ENCODE measurements at regions of chr11 and their contacts with region 1.

Region 1: DNA sequence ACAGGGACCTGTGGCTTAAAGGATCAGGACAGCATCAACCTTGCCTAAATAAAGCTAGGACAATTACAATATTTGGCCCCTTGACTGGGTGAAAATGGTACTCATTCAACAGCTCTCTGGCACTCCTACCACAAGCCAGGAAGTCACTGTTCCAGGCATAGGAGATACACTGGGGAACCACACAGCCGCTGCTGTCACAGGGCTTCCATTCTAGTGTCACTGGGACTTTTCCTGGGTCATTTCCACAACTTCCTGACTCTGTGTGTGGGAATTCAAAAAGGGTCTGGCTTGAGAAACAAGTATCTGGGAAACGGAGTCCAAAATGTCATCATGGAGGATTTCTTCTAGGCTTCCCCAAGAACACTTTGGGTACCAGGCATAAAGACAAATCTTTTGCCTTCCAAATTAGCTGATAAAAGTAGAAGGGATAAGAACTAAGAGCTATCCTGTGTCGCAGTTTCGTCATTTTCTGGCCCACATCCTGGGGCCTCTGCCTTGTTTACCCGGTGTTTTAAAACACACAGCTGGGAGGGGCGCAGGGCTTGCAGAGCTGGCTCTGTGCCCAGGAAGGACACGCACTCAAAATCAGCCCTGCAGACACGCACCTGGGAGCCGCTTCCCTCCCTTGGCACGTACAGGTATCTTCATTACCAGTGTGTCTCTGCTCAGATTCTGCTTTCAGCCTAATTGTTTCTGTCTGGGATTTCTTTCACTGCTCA is 38.0 kb downstream of the TMEM45B start:
- DNase-seq: peak; percentile 10 to 89 (median 73)
- H3K4me3 ChIP-seq: peak overlapping the region; percentile 33
- H3K4me3 Mint-ChIP-seq: peak overlapping the region in 6 of 7 donors; percentile 6 to 75 (median 62)
- H3K27ac ChIP-seq: peak overlapping the region; percentile 21
- H3K27ac Mint-ChIP-seq: peak overlapping the region; percentile 51 to 98 (median 94)
- H3K4me1 ChIP-seq: peaks cover 31% of the 10 kb centered on the region
- H3K4me1 Mint-ChIP-seq: peaks cover 31 to 41% (median 35%) of the 10 kb centered on the region in 3 donors
- H3K27me3 ChIP-seq: no peaks in the 10 kb centered on the region
- H3K27me3 Mint-ChIP-seq: peaks cover 0 to 1% of the 10 kb centered on the region in 2 donors

Region 2: DNA sequence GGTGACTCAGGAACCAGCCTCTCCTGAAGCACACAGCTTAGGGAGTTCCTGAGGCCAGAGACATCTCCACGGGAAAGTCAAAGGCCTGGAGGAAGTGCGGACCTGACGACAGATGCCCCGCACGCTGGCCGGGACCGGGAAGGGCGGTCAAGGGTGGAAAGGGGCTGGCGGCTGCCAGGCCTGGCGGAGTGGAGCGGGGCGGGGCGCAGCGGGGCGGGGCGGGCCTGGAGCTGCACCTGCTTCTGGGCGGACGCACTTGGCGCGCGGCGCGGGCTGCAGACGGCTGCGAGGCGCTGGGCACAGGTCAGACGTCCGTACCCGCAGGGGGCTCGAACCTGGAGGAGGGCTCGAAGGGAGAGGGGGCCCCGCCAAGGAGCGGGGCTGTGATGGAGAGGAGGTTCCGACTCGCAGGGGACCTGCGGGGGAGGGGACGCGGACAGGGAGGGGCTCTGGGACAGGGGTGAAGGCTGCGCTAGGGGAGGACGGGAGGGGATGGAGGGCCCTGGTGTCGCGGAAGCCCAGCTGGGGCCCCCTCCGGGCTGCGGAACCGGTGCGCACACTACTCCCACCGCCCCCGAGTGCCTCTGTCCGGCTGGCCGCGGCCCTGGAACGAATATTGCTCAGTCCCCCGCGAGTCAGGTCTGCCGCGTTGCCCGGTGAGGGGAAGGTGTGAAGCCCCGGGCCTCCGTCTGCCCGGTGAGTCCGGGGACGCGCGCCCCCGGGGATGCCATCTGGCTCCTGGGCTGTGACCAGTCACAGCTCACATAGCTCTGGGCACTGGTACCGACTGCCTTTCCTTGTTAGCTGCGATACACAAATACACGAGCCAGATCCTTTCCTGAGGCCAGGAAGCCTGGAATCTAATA is 37.8 kb before region 1 on chr11 and contains the start of gene TMEM45B:
- CTCF ChIA-PET with region 1: interaction called, 3 read pairs
- POLR2A ChIA-PET with region 1: interaction called, 16 read pairs
- DNase-seq: peak in 2 of 5 donors; percentile 3 to 35
- H3K4me3 ChIP-seq: peak within 1 kb of the TSS; percentile 34
- H3K4me3 Mint-ChIP-seq: peak within 1 kb of the TSS; percentile 73 to 88 (median 79)
- H3K27ac ChIP-seq: no peak within 1 kb of the TSS
- H3K27ac Mint-ChIP-seq: peak within 1 kb of the TSS in 7 of 8 donors; percentile 63 to 87 (median 75)
- H3K4me1 ChIP-seq: peaks cover 21% of the 10 kb centered on the region
- H3K4me1 Mint-ChIP-seq: peaks cover 27 to 41% (median 33%) of the 10 kb centered on the region in 3 donors
- H3K27me3 ChIP-seq: no peaks in the 10 kb centered on the region
- H3K27me3 Mint-ChIP-seq: peaks cover 27 to 62% of the 10 kb centered on the region in 2 donors
- total RNA-seq, gene TMEM45B: 0.44 to 0.58 TPM

Region 3: DNA sequence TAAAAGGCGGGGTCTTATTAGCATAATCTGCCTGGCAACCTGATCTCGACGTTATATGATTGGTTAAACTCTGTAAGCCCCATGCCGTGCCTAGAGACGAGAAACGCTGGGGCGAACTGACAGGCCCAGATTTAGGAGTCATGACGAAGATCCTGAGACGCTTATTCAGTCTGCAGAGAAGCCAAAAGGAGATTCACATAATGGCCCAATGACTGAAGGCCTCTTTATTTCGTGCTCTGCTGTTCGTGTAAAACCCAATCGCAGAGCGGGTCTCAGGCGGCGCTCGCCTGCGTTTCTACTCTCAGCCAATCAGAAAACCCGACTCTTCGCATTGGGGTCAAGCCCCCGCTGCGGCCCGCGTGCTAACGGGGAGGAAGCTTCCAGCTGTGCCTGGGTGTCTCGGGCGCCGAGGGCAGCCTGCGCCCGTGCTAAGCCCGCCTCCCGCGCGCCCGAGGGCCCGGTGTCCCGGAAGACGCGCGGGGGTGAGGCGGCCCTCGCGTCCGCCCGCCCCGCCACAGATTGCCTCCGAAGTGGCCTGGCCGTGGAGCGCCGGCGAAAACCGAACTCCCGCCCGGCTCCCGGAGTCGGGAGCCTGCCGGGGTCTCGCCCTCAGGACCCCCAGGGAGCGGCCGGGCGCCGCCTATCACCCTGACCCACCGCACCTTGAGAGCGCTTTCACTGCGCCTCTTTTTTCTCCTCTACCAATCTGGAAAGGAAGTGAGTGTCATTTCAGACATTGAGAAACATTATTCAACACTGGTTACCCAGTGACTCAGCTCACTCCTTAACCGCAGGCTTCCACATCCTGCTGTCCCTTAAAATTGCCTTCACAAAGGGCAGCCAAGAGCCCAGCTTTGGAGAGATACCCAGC is 149.4 kb after region 1 on chr11:
- CTCF ChIA-PET with region 1: no interaction called
- POLR2A ChIA-PET with region 1: interaction called, 13 read pairs
- DNase-seq: peak; percentile 81 to 96 (median 95)
- H3K4me3 ChIP-seq: peak overlapping the region; percentile 87
- H3K4me3 Mint-ChIP-seq: peak overlapping the region; percentile 93 to 100 (median 99)
- H3K27ac ChIP-seq: peak overlapping the region; percentile 99
- H3K27ac Mint-ChIP-seq: peak overlapping the region; percentile 98 to 100 (median 100)
- H3K4me1 ChIP-seq: peaks cover 20% of the 10 kb centered on the region
- H3K4me1 Mint-ChIP-seq: peaks cover 33 to 46% (median 40%) of the 10 kb centered on the region in 3 donors
- H3K27me3 ChIP-seq: no peaks in the 10 kb centered on the region
- H3K27me3 Mint-ChIP-seq: no peaks in the 10 kb centered on the region